Activated T-helper 2 cell treated with anti-CD3 and anti-CD28 coated beads, Interferon-gamma antibody, Interleukin-2, Interleukin-4, amounts not matched to agents 10 μg/mL and 5 μg/mL and 100 μg/mL, durations not matched to agents 14 hours and 24 hours and 36 hours (primary cell): ENCODE measurements at regions of chr12 and their contacts with region 1.

Region 1: DNA sequence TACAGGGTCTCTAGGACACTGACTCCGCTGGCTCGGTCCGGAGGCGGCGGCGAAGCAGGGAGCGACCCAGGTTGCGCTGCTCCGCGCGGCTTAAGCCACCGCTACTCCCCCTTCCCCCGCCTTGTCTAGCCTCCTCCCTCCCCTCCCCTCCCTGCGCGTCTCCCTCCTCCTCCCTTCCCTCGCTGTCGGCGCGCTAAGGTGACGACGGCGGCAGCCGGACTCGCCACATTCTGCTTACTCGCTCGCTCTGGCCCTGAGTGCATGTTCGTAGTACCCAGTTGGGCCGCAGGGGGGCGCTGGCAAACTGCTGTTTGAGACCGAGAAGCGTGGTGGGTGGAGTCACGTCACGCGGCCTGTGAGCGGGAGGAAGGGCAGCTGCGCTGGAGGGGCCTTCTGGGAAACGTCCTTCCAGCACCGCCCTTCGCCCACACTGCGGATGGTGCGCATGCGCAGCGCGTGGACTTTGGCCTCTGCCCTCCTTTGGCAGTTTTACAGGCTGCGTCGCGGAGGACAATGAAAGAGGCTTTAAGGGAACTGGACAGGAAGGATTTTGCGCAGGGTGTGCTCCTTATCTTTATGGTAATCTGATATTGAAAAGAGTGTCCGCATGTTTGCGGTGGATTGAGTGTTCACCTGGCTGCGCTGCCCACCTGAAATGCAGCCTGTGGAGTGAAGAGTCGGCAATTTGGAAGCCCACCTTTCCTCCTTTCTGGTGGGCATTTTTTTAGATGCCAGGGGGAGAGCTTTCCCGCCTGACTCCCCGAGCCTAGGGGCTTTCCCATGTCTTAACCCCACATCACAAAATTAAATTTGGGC is at the start of gene SCAF11:
- DNase-seq: peak; percentile 100
- H3K4me3 Mint-ChIP-seq: peak within 1 kb of the TSS; percentile 93
- H3K27ac Mint-ChIP-seq: peak within 1 kb of the TSS; percentile 98
- H3K4me1 Mint-ChIP-seq: peaks cover 38% of the 10 kb centered on the region
- H3K27me3 Mint-ChIP-seq: peaks cover 6% of the 10 kb centered on the region
- total RNA-seq, gene SCAF11: 125 and 128 TPM in 2 replicates

Region 2: GRCh38 chr12:45215419-45216229 is 775.1 kb before region 1 on chr12 and contains the start of gene ANO6:
- intact Hi-C with region 1: loop called (anchors 2 kb)
- DNase-seq: peak; percentile 74
- H3K4me3 Mint-ChIP-seq: peak within 1 kb of the TSS; percentile 97
- H3K27ac Mint-ChIP-seq: peak within 1 kb of the TSS; percentile 95
- H3K4me1 Mint-ChIP-seq: peaks cover 34% of the 10 kb centered on the region
- H3K27me3 Mint-ChIP-seq: no peaks in the 10 kb centered on the region
- total RNA-seq, gene ANO6: 25.2 and 25.7 TPM in 2 replicates

Region 3: DNA sequence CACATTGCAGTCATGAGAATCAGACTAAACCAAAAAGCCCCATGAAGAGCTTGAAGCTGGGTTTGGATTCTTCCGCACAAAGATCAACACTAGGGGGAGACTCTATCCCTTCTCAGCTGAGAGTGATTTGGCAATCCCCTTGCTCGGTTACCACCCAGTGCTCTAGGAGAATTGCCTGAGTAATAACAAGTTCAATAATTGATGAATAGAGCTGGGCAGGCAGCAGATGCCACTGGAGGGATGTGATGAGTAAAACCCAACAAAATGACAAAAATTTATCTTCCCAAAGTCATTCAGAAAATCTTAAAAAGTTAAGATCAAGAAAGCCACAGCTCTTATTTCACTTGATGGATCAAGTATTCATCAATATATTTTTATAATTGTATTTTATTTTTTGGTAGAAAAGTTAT is 446.8 kb before region 1 on chr12:
- intact Hi-C with region 1: loop called (anchors 10 kb)
- DNase-seq: peak; percentile 46
- H3K4me3 Mint-ChIP-seq: no peak overlapping the region
- H3K27ac Mint-ChIP-seq: no peak overlapping the region
- H3K4me1 Mint-ChIP-seq: no peaks in the 10 kb centered on the region
- H3K27me3 Mint-ChIP-seq: peaks cover 36% of the 10 kb centered on the region

Region 4: DNA sequence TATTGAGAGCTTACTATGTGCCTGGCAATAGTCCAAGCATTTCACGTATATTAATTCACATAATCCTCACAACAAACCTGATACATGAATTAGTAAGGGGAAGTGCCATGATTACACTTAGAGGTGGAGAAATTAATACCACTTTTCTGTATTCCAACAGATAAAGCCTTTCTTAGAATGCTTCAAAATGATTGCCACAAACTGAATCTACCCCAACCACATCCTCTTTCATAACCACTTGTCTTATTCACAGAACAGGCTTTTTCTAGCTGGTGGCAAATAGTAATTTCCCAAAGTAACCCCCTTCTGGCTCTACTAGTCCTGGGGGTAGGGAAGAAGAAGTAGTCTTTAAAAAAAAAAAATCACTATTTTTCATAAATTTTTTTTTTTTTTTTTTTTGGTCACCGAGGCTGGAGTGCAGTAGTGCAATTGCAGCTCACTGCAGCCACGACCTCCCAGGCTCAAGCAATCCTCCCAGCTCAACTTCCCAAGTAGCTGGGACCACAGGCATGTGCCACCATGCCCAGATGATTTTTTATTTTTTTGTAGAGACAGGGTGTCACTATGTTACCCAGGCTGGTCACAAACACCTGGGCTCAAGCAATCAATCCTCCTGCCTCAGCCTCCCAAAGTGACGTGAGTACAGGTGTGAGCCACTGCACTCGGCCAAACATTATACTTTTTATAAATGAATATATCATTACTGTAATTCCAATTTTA is 320.2 kb before region 1 on chr12:
- intact Hi-C with region 1: loop called (anchors 5 kb)
- DNase-seq: peak; percentile 11
- H3K4me3 Mint-ChIP-seq: no peak overlapping the region
- H3K27ac Mint-ChIP-seq: no peak overlapping the region
- H3K4me1 Mint-ChIP-seq: peaks cover 31% of the 10 kb centered on the region
- H3K27me3 Mint-ChIP-seq: peaks cover 20% of the 10 kb centered on the region

Region 5: DNA sequence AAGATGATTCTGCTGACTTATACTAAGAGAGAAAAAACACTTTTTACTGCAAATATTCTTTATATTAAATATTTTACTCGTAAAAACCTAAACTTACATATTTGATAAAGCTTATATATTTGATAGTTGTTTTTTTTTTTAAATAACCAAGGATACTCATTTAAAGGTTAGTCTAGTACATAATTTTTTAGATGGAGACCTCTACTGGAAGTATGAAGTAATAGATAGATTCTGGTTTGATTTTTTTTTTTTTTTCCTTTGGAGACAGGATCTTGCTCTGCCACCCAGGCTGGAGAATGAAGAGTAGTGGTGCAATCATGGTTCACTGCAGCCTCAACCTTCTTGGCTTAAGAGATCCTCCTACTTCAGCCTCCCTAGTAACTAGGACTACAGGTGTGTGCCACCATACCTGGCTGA is 244.8 kb before region 1 on chr12:
- intact Hi-C with region 1: no loop called
- DNase-seq: no peak
- H3K4me3 Mint-ChIP-seq: no peak overlapping the region
- H3K27ac Mint-ChIP-seq: no peak overlapping the region
- H3K4me1 Mint-ChIP-seq: peaks cover 39% of the 10 kb centered on the region
- H3K27me3 Mint-ChIP-seq: no peaks in the 10 kb centered on the region

Region 6: DNA sequence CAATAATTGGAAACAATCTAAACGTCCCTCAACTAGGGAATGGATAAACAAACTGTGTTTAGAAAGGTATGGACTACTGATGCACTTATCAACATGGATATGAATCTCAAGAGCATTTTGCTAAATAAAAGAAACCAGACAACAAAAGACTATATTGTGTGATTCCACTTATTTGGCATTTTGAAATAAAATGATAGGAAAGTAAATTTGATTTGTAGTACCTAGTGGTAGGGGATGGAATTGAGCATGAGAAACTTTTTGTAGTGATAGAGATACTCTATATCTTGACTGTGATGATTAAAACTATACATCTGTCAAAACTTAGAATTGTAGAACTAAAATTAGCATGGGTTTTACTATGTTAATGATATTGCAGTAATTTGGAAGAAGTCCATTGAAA is 174.0 kb before region 1 on chr12:
- intact Hi-C with region 1: no loop called
- DNase-seq: no peak
- H3K4me3 Mint-ChIP-seq: no peak overlapping the region
- H3K27ac Mint-ChIP-seq: no peak overlapping the region
- H3K4me1 Mint-ChIP-seq: peaks cover 3% of the 10 kb centered on the region
- H3K27me3 Mint-ChIP-seq: no peaks in the 10 kb centered on the region

Region 7: DNA sequence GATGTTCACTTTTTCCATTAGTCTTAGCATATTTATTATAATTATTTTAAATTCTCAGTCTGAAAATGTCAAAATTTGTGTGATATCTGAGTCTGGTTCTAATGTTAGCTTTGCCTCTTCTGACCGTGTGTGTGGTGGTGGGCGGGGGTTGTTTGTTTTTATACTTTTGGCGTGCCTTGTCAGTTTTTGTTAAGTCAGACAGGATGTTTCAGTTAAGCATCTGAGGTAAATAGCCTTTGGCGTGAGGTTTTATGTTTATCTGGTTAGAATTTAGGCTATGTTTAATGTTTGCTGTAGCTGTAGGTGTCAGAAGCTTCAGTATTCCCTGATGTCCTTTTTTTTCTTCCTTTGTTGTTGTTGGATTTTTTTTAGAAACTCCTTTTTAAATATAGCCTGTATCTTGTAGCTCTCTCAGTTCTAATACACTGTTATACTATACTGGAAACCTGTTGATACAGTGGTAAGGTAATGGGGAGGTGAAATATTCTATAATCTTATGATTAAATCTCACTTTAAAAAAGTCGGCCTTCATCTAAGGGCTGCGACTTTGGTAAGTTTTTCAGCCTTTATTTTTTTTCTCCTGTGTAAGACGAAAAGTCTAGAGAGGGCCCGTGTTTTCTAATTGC is 111.9 kb before region 1 on chr12:
- intact Hi-C with region 1: no loop called
- DNase-seq: peak; percentile 14
- H3K4me3 Mint-ChIP-seq: peak overlapping the region; percentile 41
- H3K27ac Mint-ChIP-seq: peak overlapping the region; percentile 81
- H3K4me1 Mint-ChIP-seq: peaks cover 48% of the 10 kb centered on the region
- H3K27me3 Mint-ChIP-seq: no peaks in the 10 kb centered on the region

Region 8: GRCh38 chr12:46043972-46044520 is 53.4 kb after region 1 on chr12:
- intact Hi-C with region 1: no loop called
- DNase-seq: no peak
- H3K4me3 Mint-ChIP-seq: no peak overlapping the region
- H3K27ac Mint-ChIP-seq: no peak overlapping the region
- H3K4me1 Mint-ChIP-seq: no peaks in the 10 kb centered on the region
- H3K27me3 Mint-ChIP-seq: no peaks in the 10 kb centered on the region

Region 9: DNA sequence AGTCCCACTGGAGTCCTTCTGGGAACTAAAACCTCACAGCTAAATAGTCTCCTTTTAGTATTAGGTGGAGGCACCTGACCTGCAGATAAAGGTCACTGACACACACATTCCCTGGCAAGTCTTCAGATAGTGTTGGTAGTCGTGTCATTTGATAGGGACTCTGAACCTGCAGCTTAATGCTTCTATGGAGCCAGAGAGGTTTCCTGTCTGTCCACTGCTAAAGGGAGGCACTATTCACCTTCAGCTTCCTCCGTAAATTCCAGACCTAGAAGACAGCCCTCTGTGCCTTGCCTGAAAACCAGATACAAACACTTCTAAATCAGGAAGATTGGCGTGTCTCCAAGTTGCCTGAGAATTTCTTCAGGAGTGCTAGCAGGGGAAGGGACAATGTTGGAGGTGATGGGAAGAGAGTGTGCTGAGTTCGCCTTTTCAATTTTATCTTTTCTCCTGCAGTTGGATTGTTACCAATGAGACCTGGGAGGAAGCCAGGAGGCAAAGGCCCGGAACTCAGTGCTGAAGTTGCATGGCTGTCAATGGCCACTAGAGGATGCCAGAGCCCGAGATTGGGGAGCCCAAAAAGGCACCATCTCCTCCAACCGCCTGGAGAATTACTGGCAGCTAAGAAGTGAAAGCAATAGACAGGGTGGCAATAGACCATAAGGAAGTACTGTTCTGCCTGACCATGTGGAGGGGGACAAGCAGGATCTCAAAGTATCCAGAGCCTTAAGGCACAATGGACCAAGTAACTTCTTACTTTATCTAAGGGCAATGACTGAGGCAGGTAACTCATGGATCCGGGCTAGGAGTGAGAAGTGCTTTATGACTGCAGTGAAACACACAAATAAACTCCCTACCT is 81.3 kb after region 1 on chr12:
- intact Hi-C with region 1: loop called (anchors 2 kb)
- DNase-seq: peak; percentile 40
- H3K4me3 Mint-ChIP-seq: no peak overlapping the region
- H3K27ac Mint-ChIP-seq: peak overlapping the region; percentile 28
- H3K4me1 Mint-ChIP-seq: peaks cover 5% of the 10 kb centered on the region
- H3K27me3 Mint-ChIP-seq: peaks cover 4% of the 10 kb centered on the region

Region 10: DNA sequence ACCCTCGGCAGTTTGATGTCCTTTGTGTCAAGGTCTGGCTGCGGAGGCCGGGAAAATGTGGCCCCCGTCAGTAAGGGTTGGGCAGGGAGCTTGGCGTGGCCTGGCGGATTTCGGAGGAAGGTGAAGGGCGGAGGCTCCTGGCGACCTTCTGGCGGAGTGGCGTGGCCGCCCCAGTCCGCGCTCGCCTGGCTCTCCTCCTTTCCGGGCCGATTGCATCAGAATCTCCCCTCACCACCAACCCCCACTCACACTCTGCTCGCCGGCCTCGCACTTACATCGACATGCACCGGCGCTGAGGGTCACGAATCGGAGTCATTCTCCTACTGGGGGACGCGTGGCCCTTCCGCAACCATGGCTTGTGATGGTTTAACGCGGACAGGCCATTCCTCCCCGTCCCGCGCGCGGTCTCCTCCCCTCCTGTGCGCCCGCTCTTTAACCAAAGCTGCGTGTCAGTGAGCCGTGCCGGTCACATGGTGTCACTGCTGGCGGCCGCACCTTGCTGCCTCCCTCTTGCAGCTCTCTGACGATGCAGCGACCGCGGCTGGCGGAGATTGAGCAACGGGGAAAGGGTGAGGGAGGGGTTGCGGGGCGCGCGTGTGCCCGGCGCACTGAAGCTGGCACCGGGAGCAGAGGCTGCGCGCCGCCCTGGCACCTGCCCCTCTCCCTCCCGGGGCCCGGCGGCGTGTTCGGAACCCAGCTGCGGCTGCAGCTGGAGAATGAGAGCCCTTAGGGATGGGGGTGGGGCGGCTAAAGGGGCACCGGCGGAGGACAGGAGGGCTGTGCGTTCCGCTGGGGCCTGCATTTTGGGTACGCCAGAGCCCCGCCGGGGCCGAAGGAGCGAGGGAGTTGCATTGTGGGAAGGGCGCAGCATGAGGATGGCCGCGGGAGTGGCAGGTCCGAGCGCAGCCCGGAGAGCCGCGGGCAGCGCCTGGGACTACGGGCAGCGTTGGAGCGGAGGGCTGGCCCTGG is 278.2 kb after region 1 on chr12 and contains the start of gene SLC38A1:
- intact Hi-C with region 1: loop called (anchors 1 kb)
- DNase-seq: peak; percentile 86
- H3K4me3 Mint-ChIP-seq: no peak within 1 kb of the TSS
- H3K27ac Mint-ChIP-seq: no peak within 1 kb of the TSS
- H3K4me1 Mint-ChIP-seq: peaks cover 26% of the 10 kb centered on the region
- H3K27me3 Mint-ChIP-seq: no peaks in the 10 kb centered on the region
- total RNA-seq, gene SLC38A1: 152 and 154 TPM in 2 replicates